Activated T-helper 1 cell treated with anti-CD3 and anti-CD28 coated beads, Interleukin-12 subunit alpha, Interleukin-12 subunit beta, Interleukin-2, Interleukin-4 antibody, amounts not matched to agents 30 ng/mL and 10 ng/mL and 1 ng/mL, durations not matched to agents 14 hours and 24 hours and 36 hours (primary cell): ENCODE measurements at regions of chr17 and their contacts with region 1.

Region 1: GRCh38 chr17:50269477-50270434 is 4.5 kb upstream of the TMEM92 start:
- DNase-seq: peak; percentile 62
- H3K4me3 Mint-ChIP-seq: no peak overlapping the region
- H3K27ac Mint-ChIP-seq: no peak overlapping the region
- H3K4me1 Mint-ChIP-seq: peaks cover 13% of the 10 kb centered on the region
- H3K27me3 Mint-ChIP-seq: peaks cover 13% of the 10 kb centered on the region

Region 2: GRCh38 chr17:50169121-50169764 is 100.5 kb before region 1 on chr17:
- intact Hi-C with region 1: loop called (anchors 2 kb)
- DNase-seq: peak; percentile 47
- H3K4me3 Mint-ChIP-seq: peak overlapping the region; percentile 15
- H3K27ac Mint-ChIP-seq: peak overlapping the region; percentile 7
- H3K4me1 Mint-ChIP-seq: peaks cover 17% of the 10 kb centered on the region
- H3K27me3 Mint-ChIP-seq: peaks cover 9% of the 10 kb centered on the region

Region 3: DNA sequence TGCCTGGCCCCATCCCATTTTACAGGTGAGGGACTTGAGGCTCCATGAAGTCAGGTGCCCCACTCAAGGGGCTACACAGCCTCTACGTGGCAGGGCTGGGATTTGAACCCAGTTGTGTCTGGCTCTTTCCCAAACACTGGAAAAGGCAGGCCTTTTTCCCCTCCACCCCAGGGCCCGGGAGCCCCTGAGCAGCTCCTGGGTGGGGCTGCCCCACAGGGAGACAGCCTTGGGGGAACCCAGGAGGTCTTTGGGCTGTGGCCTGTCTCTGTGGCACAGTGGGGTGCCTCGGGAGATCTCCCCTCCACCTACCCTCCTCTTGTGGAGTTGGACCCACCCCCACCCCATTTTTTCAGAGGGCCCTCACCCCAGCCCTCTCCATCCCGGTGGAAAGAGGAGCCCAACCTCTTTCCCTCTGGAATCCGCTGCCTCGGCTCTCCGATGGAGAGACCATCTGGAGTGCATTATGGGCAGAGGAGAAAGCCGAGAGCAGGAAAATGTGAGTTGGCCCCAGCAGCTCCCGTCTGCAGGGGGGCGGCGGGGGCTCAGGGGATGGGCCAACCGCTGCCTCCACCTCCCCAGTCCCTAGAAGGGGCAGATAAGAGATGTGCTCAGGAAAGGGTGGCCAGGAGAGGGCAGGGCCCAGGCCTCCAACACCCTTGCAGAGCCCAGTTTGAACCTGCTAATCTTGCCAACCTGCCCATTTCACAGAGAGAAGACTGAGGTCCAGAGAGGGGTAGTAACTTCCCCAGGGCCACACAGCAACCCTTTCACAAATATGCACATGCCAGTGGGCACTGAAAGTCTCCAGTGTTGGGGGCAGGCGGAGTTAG is 10.9 kb before region 1 on chr17:
- intact Hi-C with region 1: no loop called
- DNase-seq: no peak
- H3K4me3 Mint-ChIP-seq: no peak overlapping the region
- H3K27ac Mint-ChIP-seq: no peak overlapping the region
- H3K4me1 Mint-ChIP-seq: no peaks in the 10 kb centered on the region
- H3K27me3 Mint-ChIP-seq: peaks cover 15% of the 10 kb centered on the region

Region 4: DNA sequence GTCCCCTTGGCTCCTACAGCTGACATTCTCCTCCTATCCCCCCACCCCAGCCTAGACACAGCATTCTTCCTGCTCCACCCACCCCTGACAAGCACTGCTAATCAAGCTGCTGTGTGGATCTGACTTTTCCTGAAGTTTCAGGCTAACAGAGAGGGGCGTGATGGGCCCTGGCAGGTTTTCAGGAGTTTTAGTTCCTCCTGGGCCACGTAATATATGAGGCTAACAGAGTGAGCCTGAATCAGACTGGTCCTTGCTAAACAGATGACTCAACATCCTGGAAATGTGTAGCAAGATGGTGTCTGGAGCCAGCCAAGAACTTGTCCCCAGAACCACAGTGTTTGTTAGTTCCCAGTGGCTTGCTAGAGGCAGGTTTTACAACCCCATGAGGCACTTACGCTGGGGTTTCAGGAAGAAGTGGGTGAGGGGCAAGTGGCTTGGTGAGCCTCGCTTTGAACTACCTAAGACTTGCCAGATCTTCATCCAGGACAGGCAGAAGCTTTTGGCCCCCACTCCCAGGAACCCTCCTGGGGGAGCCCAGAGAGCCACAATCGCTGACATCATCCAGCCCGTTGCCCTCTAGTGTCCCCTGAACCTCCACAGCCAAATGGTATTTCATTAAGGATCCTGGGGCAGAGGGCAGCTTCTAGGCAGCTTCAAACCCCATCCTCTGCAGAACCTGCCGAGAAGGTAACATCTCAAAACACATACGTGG is 20.4 kb after region 1 on chr17:
- intact Hi-C with region 1: loop called (anchors 2 kb)
- DNase-seq: peak; percentile 15
- H3K4me3 Mint-ChIP-seq: peak overlapping the region; percentile 48
- H3K27ac Mint-ChIP-seq: peak overlapping the region; percentile 83
- H3K4me1 Mint-ChIP-seq: peaks cover 32% of the 10 kb centered on the region
- H3K27me3 Mint-ChIP-seq: no peaks in the 10 kb centered on the region

Region 5: DNA sequence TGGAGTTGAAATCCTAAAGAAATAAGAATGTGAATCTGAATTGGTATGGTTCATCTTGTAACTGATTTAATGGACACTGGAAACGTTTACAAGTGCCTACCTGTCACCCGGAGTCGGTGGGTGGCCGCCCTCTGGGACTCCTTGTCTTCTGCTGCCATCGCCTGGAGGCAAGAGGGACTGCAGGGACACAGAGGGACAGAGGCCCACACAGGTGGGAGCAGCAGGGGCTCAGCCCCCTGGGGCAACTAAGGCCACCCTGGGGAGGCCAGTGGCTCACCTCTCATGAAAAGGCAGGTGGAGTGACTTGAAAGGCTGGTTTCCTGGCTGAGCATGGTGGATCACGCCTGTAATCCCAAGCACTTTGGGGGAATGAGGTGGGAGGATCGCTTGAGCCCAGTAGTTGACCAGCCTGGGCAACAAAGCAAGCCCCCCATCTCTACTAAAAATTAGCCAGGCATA is 27.7 kb after region 1 on chr17:
- intact Hi-C with region 1: loop called (anchors 1 kb)
- DNase-seq: peak; percentile 69
- H3K4me3 Mint-ChIP-seq: no peak overlapping the region
- H3K27ac Mint-ChIP-seq: no peak overlapping the region
- H3K4me1 Mint-ChIP-seq: peaks cover 8% of the 10 kb centered on the region
- H3K27me3 Mint-ChIP-seq: peaks cover 3% of the 10 kb centered on the region

Region 6: DNA sequence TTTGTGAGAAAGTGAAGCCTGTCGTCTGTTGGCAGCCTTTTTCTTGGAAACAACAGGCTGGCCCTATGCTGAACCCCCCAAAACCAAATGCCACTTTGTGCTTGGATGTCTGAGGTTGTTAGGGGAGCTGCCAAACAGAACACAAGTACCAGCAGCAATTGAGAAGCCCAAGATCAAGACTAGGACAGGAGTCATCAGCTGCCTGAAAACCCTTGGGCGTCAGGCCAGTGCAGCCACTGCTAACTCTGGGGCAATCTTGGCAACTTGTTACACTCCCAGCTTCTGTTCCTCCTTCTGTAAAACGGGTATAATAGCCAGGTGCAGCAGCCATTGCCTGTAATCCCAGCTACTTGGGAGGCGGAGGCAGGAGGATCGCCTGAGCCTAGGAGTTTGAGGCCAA is 136.8 kb after region 1 on chr17:
- intact Hi-C with region 1: no loop called
- DNase-seq: no peak
- H3K4me3 Mint-ChIP-seq: no peak overlapping the region
- H3K27ac Mint-ChIP-seq: no peak overlapping the region
- H3K4me1 Mint-ChIP-seq: no peaks in the 10 kb centered on the region
- H3K27me3 Mint-ChIP-seq: peaks cover 25% of the 10 kb centered on the region

Region 7: GRCh38 chr17:50478391-50479381 is 208.9 kb after region 1 on chr17 and contains the start of gene RSAD1:
- intact Hi-C with region 1: no loop called
- DNase-seq: peak; percentile 79
- H3K4me3 Mint-ChIP-seq: peak within 1 kb of the TSS; percentile 91
- H3K27ac Mint-ChIP-seq: peak within 1 kb of the TSS; percentile 81
- H3K4me1 Mint-ChIP-seq: peaks cover 27% of the 10 kb centered on the region
- H3K27me3 Mint-ChIP-seq: peaks cover 6% of the 10 kb centered on the region
- total RNA-seq, gene RSAD1: 53.4 and 54.2 TPM in 2 replicates

Region 8: DNA sequence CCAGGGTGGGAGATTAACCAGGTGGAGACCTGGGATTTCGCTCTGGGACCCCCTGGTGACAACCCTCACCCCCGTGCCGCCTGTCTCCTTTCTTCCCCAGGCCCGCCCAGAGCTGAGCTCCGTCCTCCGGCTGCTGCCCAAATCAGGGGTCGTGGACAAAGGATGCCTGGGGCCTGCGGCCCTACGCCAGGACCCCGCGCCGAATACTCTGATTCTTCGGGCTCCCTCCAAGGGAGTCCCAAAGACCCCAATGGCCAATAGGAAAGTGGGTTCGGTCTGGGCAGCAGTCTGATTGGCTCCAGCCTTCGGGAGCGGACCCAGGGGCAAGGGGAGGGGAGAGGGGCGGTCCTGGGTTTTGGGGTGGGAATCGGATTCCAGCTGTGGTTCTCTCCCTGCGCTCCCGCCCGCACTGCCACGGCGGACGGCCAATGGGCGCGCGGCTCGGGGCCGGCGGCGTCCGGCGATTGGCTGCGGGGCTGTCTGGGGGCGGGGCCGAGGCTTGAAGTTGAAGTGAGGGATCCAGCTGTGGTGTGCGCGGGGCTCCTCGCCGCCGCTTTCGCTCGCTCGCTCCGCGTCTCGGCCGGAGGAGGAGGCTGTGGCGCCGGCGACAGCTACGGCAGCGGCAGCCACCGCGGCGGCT is 290.5 kb after region 1 on chr17 and contains the start of gene CACNA1G:
- intact Hi-C with region 1: no loop called
- DNase-seq: peak; percentile 87
- H3K4me3 Mint-ChIP-seq: peak within 1 kb of the TSS; percentile 70
- H3K27ac Mint-ChIP-seq: no peak within 1 kb of the TSS
- H3K4me1 Mint-ChIP-seq: peaks cover 11% of the 10 kb centered on the region
- H3K27me3 Mint-ChIP-seq: peaks cover 59% of the 10 kb centered on the region
- total RNA-seq, gene CACNA1G: 0.05 and 0.07 TPM in 2 replicates